Right ventricle myocardium inferior (tissue), 1 donor: ENCODE measurements at regions of chr9 and their contacts with region 1.

Region 1: DNA sequence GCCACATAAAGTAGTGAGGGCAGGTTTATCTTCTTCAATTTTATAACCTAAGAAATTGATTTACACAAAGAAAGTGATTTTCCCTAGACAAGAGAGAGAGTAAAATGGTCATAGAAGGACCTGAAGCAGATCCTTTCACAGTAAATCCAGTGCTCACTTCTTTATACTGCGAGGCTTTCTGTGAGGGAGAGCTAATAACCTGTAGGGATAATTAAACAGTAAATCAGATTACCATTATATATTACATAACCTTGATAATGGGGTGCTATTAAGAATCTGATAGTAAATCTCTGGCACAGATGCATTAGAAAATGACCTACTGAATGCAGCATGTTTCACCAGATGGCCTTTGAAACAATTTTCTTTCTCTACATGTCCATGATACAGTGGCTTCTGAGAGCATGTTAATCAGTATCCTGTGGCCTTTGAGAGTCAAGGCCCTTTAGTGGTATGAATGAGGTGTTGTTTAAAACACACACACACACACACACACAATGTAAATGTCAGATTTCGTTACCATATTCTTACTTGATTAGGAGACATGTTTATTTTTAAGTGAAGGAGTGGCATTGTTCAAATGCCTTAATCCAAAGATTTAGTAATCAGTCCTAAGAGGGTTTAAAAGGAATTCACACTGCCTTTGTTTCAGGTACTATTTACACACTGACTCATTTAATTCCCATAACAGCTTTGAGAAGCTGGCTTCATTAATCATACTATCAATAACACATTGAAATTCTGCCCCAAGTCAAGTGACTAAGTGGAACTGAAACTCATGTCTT is 124.7 kb downstream of the ALDH1A1 start:
- DNase-seq: no peak
- ATAC-seq: no peak

Region 2: GRCh38 chr9:72038890-72039410 is 789.2 kb before region 1 on chr9:
- intact Hi-C with region 1: loop called (anchors 10 kb)
- DNase-seq: peak; percentile 74
- ATAC-seq: peak; percentile 80

Region 3: GRCh38 chr9:72280913-72281500 is 547.1 kb before region 1 on chr9:
- intact Hi-C with region 1: loop called (anchors 5 kb)
- DNase-seq: peak; percentile 87
- ATAC-seq: peak; percentile 78